ENCODE measurements at regions of chr12 and their contacts with region 1.

Region 1: GRCh38 chr12:75511116-75512048 is at the start of gene KRR1:
- DNase-seq: peak; percentile 74 to 98 (median 85)
- ATAC-seq: peak; percentile 97
- H3K4me3 ChIP-seq: peak within 1 kb of the TSS; percentile 81
- H3K4me3 Mint-ChIP-seq: peak within 1 kb of the TSS; percentile 99
- H3K27ac ChIP-seq: peak within 1 kb of the TSS; percentile 81 to 92
- H3K27ac Mint-ChIP-seq: peak within 1 kb of the TSS; percentile 95
- H3K4me1 ChIP-seq: peaks cover 8% of the 10 kb centered on the region
- H3K4me1 Mint-ChIP-seq: peaks cover 38% of the 10 kb centered on the region
- H3K27me3 ChIP-seq: no peaks in the 10 kb centered on the region
- H3K27me3 Mint-ChIP-seq: no peaks in the 10 kb centered on the region
- CTCF ChIP-seq: no peak
- total RNA-seq, gene KRR1: 144 to 148 TPM

Region 2: DNA sequence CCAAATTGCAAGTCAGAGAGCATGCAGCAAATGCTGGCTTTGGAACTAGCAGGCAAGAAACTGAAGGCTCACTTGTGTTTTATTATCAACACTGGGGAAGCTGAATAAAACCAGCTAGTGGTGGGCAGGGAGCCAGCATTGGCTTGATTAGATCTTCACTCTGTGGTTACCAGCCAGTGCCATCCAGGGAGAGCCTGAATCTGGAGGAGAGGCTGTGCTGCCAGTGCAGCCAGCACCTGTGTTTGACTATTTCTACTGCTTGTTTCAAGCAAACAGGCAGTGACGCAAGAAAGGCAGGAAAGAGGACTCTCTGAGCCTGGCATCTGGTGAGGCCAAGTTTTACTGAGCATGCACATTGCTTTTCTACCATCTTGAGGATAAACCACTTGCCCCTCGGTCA is 273.2 kb after region 1 on chr12:
- CTCF ChIA-PET with region 1: no interaction called
- POLR2A ChIA-PET with region 1: no interaction called
- intact Hi-C with region 1: no loop called
- DNase-seq: peak in 5 of 14 experiments; percentile 5 to 14 (median 8)
- ATAC-seq: peak; percentile 26
- H3K4me3 ChIP-seq: no peak overlapping the region
- H3K4me3 Mint-ChIP-seq: no peak overlapping the region
- H3K27ac ChIP-seq: no peak overlapping the region
- H3K27ac Mint-ChIP-seq: no peak overlapping the region
- H3K4me1 ChIP-seq: peaks cover 4% of the 10 kb centered on the region
- H3K4me1 Mint-ChIP-seq: no peaks in the 10 kb centered on the region
- H3K27me3 ChIP-seq: no peaks in the 10 kb centered on the region
- H3K27me3 Mint-ChIP-seq: no peaks in the 10 kb centered on the region
- CTCF ChIP-seq: no peak

Region 3: GRCh38 chr12:76348079-76348901 is 836.9 kb after region 1 on chr12 and contains the start of gene BBS10:
- CTCF ChIA-PET with region 1: no interaction called
- POLR2A ChIA-PET with region 1: interaction called, 6 read pairs
- intact Hi-C with region 1: loop called (anchors 5 kb)
- DNase-seq: peak; percentile 75 to 92 (median 82)
- ATAC-seq: peak; percentile 96
- H3K4me3 ChIP-seq: peak within 1 kb of the TSS; percentile 81
- H3K4me3 Mint-ChIP-seq: peak within 1 kb of the TSS; percentile 96
- H3K27ac ChIP-seq: peak within 1 kb of the TSS; percentile 77
- H3K27ac Mint-ChIP-seq: peak within 1 kb of the TSS; percentile 95
- H3K4me1 ChIP-seq: peaks cover 15% of the 10 kb centered on the region
- H3K4me1 Mint-ChIP-seq: peaks cover 43% of the 10 kb centered on the region
- H3K27me3 ChIP-seq: no peaks in the 10 kb centered on the region
- H3K27me3 Mint-ChIP-seq: no peaks in the 10 kb centered on the region
- CTCF ChIP-seq: peak; percentile 33
- total RNA-seq, gene BBS10: 1.4 TPM